GM13977 (cell line): ENCODE measurements at regions of chr21 and their contacts with region 1.

Region 1: DNA sequence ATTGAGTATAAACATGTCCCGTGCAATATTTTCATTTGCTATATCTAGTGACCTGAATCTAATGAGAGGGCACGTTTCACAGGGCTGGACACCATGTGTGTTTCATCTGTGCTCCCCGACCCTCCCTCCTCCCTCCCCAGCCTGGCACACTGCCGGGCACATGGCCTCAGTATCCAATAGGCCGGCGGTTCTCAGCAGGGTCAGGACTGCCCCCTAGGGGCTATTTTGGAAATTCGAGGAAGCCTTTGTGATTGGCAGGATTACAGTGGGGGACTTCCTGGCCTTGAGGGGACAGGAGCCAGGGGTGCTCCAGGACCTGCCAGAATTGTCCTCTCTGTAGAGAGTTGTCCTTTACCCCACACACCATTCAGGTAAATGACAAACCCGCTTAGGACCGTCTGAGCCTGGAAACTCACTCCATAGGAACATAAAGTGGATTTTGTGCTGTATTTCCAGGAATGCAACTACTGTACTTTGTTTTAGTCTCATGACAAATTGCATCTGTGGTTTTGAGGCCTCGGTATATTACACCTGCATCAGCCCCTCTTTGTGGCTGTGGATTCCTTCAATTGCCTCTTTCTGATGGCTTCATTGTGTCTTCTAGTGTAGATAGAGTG is 109.5 kb upstream of the SIM2 start:
- DNase-seq: peak; percentile 68
- CTCF ChIP-seq: peak; percentile 63

Region 2: GRCh38 chr21:36504067-36505058 is 85.1 kb before region 1 on chr21:
- in situ Hi-C with region 1: loop called (anchors 10 kb)
- DNase-seq: peak; percentile 42
- CTCF ChIP-seq: peak; percentile 77

Region 3: GRCh38 chr21:36959020-36959835 is 369.8 kb after region 1 on chr21:
- in situ Hi-C with region 1: no loop called
- DNase-seq: no peak
- CTCF ChIP-seq: no peak